ENCODE measurements at regions of chr7 and their contacts with region 1.

Region 1: DNA sequence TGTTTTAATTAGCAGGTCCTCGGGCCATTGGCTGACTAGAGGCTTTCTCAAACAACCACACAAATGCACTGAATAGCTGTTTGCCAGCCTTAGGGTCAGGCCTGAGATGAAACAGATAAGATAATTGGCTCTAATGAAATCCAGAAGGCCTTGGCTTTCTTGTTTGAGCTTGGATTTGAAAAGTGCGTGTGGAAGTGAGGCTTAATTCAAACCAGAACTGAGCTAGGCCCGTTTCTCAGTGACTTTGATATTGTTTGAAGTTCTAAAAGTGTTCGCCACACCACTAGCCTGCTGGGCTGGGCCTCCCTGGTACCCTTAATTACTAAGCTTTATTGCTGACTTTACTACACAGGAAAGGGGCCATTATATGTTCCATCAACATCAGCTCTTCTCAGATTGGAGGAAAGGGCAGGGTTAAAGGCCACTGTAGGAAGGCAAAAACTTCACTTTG is 270.6 kb downstream of the TWIST1 start:
- DNase-seq: no peak
- ATAC-seq: no peak
- H3K4me3 ChIP-seq: no peak overlapping the region
- H3K27ac ChIP-seq: no peak overlapping the region
- H3K4me1 ChIP-seq: no peaks in the 10 kb centered on the region
- H3K27me3 ChIP-seq: no peaks in the 10 kb centered on the region
- CTCF ChIP-seq: no peak
- POLR2A ChIP-seq: no peak

Region 2: GRCh38 chr7:18901982-18902421 is 55.2 kb after region 1 on chr7:
- intact Hi-C with region 1: loop called in 1 of 10 experiments (anchors 5 kb)
- DNase-seq: no peak
- ATAC-seq: no peak
- H3K4me3 ChIP-seq: no peak overlapping the region
- H3K27ac ChIP-seq: no peak overlapping the region
- H3K4me1 ChIP-seq: no peaks in the 10 kb centered on the region
- H3K27me3 ChIP-seq: no peaks in the 10 kb centered on the region
- CTCF ChIP-seq: no peak
- POLR2A ChIP-seq: no peak

Region 3: DNA sequence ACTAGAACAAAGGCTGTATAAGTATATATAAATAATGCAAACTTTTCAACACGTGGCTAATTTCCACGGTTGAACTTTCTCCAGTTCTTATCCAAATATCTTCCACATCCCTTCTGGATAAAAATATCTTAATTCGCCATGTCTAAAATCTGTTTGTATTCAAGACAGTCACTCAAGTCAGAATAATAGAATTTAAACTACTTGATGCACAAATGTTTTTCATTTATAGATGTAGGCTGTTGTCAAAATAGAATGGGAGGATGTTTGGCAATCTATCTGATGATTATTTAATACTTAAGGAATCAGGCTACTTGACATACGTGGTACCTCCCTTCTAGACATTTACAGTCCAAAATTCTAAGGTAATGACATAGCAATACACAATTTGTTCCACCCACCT is 66.3 kb after region 1 on chr7:
- intact Hi-C with region 1: no loop called
- DNase-seq: no peak
- ATAC-seq: no peak
- H3K4me3 ChIP-seq: no peak overlapping the region
- H3K27ac ChIP-seq: no peak overlapping the region
- H3K4me1 ChIP-seq: no peaks in the 10 kb centered on the region
- H3K27me3 ChIP-seq: no peaks in the 10 kb centered on the region
- CTCF ChIP-seq: no peak
- POLR2A ChIP-seq: no peak

Region 4: GRCh38 chr7:19404912-19405329 is 558.1 kb after region 1 on chr7:
- intact Hi-C with region 1: no loop called
- DNase-seq: no peak
- ATAC-seq: peak in 1 of 4 donors; percentile 67
- H3K4me3 ChIP-seq: no peak overlapping the region
- H3K27ac ChIP-seq: no peak overlapping the region
- H3K4me1 ChIP-seq: no peaks in the 10 kb centered on the region
- H3K27me3 ChIP-seq: no peaks in the 10 kb centered on the region
- CTCF ChIP-seq: no peak
- POLR2A ChIP-seq: no peak

Measured in heart left ventricle (tissue), 16 donors.